Activated CD4-positive, alpha-beta memory T cell treated with anti-CD3 and anti-CD28 coated beads, Interleukin-2, amount 10 ng/mL, durations not matched to agents 7 days and 5 days (primary cell): ENCODE measurements at regions of chr19 and their contacts with region 1.

Region 1: GRCh38 chr19:45485305-45486077 is 11.4 kb downstream of the RTN2 start:
- DNase-seq: peak; percentile 99
- H3K4me3 Mint-ChIP-seq: peak overlapping the region; percentile 86
- H3K27ac Mint-ChIP-seq: peak overlapping the region; percentile 78
- H3K4me1 Mint-ChIP-seq: peaks cover 16% of the 10 kb centered on the region
- H3K27me3 Mint-ChIP-seq: peaks cover 7% of the 10 kb centered on the region

Region 2: GRCh38 chr19:45406226-45407090 is 79.0 kb before region 1 on chr19 and contains the start of gene POLR1G:
- CTCF ChIA-PET with region 1: interaction called, 10 read pairs
- POLR2A ChIA-PET with region 1: interaction called, 3 read pairs
- DNase-seq: peak; percentile 82
- H3K4me3 Mint-ChIP-seq: peak within 1 kb of the TSS; percentile 84
- H3K27ac Mint-ChIP-seq: peak within 1 kb of the TSS; percentile 79
- H3K4me1 Mint-ChIP-seq: peaks cover 46% of the 10 kb centered on the region
- H3K27me3 Mint-ChIP-seq: peaks cover 24% of the 10 kb centered on the region
- total RNA-seq, gene POLR1G: 3.6 to 3.8 TPM

Region 3: GRCh38 chr19:45423589-45424190 is 61.8 kb before region 1 on chr19 and contains the start of gene ERCC1:
- CTCF ChIA-PET with region 1: interaction called, 10 read pairs
- POLR2A ChIA-PET with region 1: no interaction called
- DNase-seq: peak; percentile 92
- H3K4me3 Mint-ChIP-seq: peak within 1 kb of the TSS; percentile 89
- H3K27ac Mint-ChIP-seq: peak within 1 kb of the TSS; percentile 93
- H3K4me1 Mint-ChIP-seq: peaks cover 69% of the 10 kb centered on the region
- H3K27me3 Mint-ChIP-seq: peaks cover 7% of the 10 kb centered on the region
- total RNA-seq, gene ERCC1: 59.8 to 60.6 TPM

Region 4: GRCh38 chr19:45469132-45469944 is 16.2 kb before region 1 on chr19:
- CTCF ChIA-PET with region 1: interaction called, 35 read pairs
- POLR2A ChIA-PET with region 1: interaction called, 8 read pairs
- DNase-seq: peak; percentile 97
- H3K4me3 Mint-ChIP-seq: peak overlapping the region; percentile 88
- H3K27ac Mint-ChIP-seq: peak overlapping the region; percentile 91
- H3K4me1 Mint-ChIP-seq: peaks cover 29% of the 10 kb centered on the region
- H3K27me3 Mint-ChIP-seq: peaks cover 25% of the 10 kb centered on the region

Region 5: DNA sequence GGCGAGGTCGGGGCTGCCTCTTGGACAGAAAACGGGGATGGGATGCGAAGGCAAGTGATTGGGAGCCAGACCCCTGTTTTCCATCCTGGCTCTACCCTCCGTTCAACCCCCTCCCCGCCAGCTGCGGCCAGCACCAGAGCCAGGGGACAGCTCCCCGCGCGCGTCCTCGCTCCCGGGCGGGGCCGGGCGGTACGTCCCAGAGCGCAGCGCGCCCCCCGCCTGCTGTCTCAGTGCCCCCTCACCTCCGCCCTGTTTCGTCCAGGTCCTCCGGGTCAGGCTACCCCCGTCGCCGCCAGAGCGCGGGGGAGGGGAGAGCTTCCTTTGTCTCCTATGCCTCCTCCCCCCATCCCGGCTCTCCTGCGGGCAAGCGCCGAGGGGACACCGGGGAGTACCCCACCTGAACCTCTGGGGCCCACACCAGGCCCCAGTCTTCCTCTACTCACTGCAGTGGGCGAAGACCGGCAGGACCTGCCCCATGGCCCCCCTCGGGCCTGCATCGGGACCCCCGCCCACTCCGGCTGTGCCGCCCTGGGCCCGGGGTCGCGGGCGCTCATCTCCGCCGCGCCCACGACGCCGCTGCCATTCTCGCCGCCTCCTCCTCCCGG is 11.0 kb after region 1 on chr19:
- CTCF ChIA-PET with region 1: interaction called, 42 read pairs
- POLR2A ChIA-PET with region 1: interaction called, 4 read pairs
- DNase-seq: peak; percentile 63
- H3K4me3 Mint-ChIP-seq: peak overlapping the region; percentile 59
- H3K27ac Mint-ChIP-seq: no peak overlapping the region
- H3K4me1 Mint-ChIP-seq: peaks cover 53% of the 10 kb centered on the region
- H3K27me3 Mint-ChIP-seq: peaks cover 40% of the 10 kb centered on the region

Region 6: GRCh38 chr19:45558399-45558878 is 72.9 kb after region 1 on chr19:
- CTCF ChIA-PET with region 1: interaction called, 13 read pairs
- POLR2A ChIA-PET with region 1: no interaction called
- DNase-seq: peak; percentile 75
- H3K4me3 Mint-ChIP-seq: no peak overlapping the region
- H3K27ac Mint-ChIP-seq: no peak overlapping the region
- H3K4me1 Mint-ChIP-seq: peaks cover 13% of the 10 kb centered on the region
- H3K27me3 Mint-ChIP-seq: no peaks in the 10 kb centered on the region